PC-9 (cell line): ENCODE measurements at regions of chr7 and their contacts with region 1.

Region 1: GRCh38 chr7:75534727-75535307 is 42.7 kb downstream of the SPDYE5 start:
- DNase-seq: peak in 1 of 2 experiments; percentile 74
- H3K4me3 ChIP-seq: no peak overlapping the region
- H3K27ac ChIP-seq: 0 out of 2 replicates have a peak overlapping the region, but pooled peaks have one; percentile 19
- H3K4me1 ChIP-seq: peaks cover 34% of the 10 kb centered on the region
- H3K27me3 ChIP-seq: no peaks in the 10 kb centered on the region
- CTCF ChIP-seq: no peak

Region 2: DNA sequence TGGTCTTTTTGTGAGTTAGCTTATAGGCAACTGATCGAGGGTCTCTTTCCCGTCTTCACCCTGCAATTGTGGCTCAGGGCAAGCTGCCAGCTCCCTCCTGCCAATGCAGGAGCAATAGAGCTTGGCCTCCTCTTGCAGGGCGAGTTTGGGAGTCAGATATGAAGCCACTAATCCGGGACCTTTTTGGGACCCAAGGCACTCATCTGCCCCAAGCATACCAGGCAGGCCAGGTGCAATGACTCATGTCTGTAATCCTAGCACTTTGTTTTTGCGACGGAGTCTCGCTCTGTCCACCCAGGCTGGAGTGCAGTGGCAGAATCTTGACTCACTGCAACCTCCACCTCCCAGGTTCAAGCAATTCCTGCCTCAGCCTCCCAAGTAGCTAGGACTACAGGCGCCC is 1430.1 kb before region 1 on chr7:
- CTCF ChIA-PET with region 1: no interaction called
- POLR2A ChIA-PET with region 1: interaction called, 17 read pairs
- intact Hi-C with region 1: no loop called
- DNase-seq: peak; percentile 87 to 92
- H3K4me3 ChIP-seq: no peak overlapping the region
- H3K27ac ChIP-seq: peak overlapping the region; percentile 73
- H3K4me1 ChIP-seq: peaks cover 27% of the 10 kb centered on the region
- H3K27me3 ChIP-seq: no peaks in the 10 kb centered on the region
- CTCF ChIP-seq: no peak

Region 3: GRCh38 chr7:75546237-75547015 is 11.6 kb after region 1 on chr7:
- CTCF ChIA-PET with region 1: no interaction called
- POLR2A ChIA-PET with region 1: no interaction called
- intact Hi-C with region 1: no loop called
- DNase-seq: no peak
- H3K4me3 ChIP-seq: no peak overlapping the region
- H3K27ac ChIP-seq: no peak overlapping the region
- H3K4me1 ChIP-seq: no peaks in the 10 kb centered on the region
- H3K27me3 ChIP-seq: no peaks in the 10 kb centered on the region
- CTCF ChIP-seq: no peak

Region 4: DNA sequence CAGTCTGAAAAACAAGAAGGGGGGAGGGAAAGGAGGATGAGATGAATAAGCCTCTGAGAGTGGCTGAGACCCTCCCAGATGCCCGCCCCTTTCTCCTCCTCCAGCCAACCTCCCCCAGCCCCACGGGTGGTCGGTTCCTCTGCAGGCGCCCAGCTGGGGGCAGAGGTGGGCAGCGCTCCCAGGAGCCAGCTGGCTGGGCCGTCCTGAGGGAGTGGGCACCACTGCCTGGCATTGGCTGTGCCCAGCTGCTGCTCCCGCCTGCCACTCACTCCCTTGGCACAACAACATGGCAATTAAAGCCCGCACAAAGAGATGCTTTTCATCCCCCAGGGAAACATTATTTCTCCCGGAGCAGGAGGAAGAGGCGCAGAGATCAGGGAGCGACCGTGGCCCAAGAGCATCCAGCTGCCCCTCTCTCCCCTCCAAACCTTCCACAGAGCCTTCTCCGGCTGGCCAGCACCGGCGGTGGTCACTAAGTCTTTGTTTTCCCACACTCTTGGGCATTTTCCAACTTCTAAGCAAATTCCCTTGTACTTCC is 64.5 kb after region 1 on chr7:
- CTCF ChIA-PET with region 1: no interaction called
- POLR2A ChIA-PET with region 1: no interaction called
- intact Hi-C with region 1: loop called (anchors 2 kb)
- DNase-seq: no peak
- H3K4me3 ChIP-seq: no peak overlapping the region
- H3K27ac ChIP-seq: no peak overlapping the region
- H3K4me1 ChIP-seq: peaks cover 38% of the 10 kb centered on the region
- H3K27me3 ChIP-seq: no peaks in the 10 kb centered on the region
- CTCF ChIP-seq: no peak

Region 5: GRCh38 chr7:75642810-75643486 is 108.1 kb after region 1 on chr7:
- CTCF ChIA-PET with region 1: no interaction called
- POLR2A ChIA-PET with region 1: interaction called, 9 read pairs
- intact Hi-C with region 1: loop called (anchors 5 kb)
- DNase-seq: peak; percentile 34 to 62
- H3K4me3 ChIP-seq: no peak overlapping the region
- H3K27ac ChIP-seq: no peak overlapping the region
- H3K4me1 ChIP-seq: 0 out of 2 replicates have a peak, but pooled peaks cover 8% of the 10 kb centered on the region
- H3K27me3 ChIP-seq: no peaks in the 10 kb centered on the region
- CTCF ChIP-seq: peak; percentile 94

Region 6: DNA sequence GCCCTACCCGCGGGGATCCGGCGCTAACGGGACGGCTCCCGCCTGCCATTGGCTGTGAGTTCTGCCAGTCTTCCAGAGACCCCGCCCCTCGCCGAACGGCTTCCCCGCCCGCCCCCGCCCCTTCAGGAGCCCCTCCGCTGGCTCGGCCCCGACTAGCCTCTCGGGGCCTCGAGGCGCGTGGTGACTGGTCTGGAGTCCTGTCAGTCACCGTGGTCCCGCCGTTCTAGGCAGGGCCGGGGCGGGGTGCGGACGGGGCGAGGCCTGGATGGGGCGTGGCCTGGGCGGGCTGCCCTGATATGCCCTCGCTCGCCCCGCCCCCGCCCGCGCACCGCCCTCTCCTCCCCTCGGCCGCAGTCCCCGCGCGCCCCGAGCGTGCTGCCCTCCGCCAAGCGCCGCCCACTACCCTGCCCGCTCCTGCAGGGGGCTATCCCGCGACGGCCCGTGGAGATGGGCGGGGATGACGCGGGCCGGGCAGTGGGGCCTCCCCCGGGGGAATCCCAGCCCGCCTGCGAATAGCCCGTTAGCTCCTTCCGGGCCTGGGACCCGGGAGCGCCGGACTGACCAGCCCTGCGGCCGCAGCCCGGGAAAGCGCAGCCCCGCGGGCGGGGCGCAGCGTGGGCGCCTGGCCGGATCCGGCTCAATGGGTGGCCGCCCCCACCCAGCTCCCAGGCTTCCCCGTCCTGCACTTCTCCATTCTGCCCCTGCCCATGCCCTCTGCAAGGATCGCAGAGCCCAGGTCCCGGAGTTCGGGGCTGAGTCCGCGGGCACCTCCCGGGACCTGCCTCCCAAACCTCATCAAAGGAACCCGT is 204.4 kb after region 1 on chr7:
- CTCF ChIA-PET with region 1: no interaction called
- POLR2A ChIA-PET with region 1: no interaction called
- intact Hi-C with region 1: loop called (anchors 10 kb)
- DNase-seq: peak; percentile 89 to 100
- H3K4me3 ChIP-seq: peak overlapping the region; percentile 88
- H3K27ac ChIP-seq: no peak overlapping the region
- H3K4me1 ChIP-seq: 0 out of 2 replicates have a peak, but pooled peaks cover 3% of the 10 kb centered on the region
- H3K27me3 ChIP-seq: no peaks in the 10 kb centered on the region
- CTCF ChIP-seq: no peak

Region 7: DNA sequence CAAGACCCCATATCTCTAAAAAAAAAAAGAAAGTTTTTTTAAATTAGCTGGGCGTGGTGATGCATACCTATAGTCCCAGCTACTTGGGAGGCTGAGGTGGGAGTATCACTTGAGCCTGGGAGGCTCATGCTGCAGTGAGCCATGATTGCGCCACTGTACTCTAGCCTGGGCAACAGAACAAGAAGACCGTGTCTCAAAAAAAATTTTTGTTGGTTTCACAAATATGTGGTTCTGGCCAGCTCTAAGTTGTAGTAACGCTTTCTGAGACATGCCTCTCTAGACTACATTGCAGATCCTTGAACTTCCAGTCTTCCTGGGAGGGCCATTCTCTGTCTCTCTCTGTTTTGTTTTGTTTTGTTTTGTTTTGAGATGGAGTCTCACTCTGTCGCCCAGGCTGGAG is 319.4 kb after region 1 on chr7:
- CTCF ChIA-PET with region 1: no interaction called
- POLR2A ChIA-PET with region 1: no interaction called
- intact Hi-C with region 1: no loop called
- DNase-seq: no peak
- H3K4me3 ChIP-seq: no peak overlapping the region
- H3K27ac ChIP-seq: no peak overlapping the region
- H3K4me1 ChIP-seq: no peaks in the 10 kb centered on the region
- H3K27me3 ChIP-seq: no peaks in the 10 kb centered on the region
- CTCF ChIP-seq: no peak